Gastrocnemius medialis (tissue), 4 donors: ENCODE measurements at regions of chr6 and their contacts with region 1.

Region 1: DNA sequence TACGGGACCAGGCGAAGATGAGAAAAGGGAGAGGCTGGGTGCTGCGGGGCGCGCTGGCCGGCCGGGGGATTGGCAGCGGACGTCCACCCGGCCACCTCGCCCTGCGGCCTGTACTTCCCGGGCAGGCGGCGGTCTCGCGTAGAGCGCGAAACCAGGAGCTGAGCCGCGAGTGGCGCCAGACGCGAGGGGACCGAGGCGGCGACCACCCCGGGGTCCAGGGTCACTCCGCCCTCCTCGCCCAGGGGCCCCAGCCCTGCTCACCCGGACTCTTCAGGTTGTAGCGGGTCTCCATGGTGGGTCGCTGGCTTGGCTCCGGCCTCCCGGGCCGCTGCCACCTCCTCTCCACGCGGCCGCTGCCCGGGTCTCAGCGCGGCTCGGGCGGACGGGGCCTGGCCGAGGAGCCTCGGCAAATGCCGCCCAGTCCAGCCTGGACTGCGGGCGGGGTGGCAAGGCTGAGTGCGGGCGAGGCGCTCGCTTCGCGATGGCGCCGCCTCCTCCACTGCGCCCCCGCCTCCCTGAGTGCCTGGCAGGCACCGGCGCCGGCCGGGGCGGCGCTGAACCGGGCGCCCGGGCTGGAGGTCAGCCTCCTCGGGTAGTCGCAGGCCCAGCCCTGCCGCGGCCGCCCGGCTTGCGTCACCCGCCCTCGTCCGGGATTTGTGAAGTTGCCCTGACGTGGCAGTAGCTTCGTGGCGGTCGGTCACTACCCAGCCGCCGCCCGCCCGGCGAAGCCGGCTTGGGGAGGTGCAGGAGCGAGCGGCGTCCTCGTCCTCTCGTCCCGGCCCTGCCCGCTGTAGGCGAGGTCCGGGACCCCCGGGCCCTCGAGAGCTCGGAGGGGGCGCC is at the start of gene UBE2J1:
- DNase-seq: peak; percentile 90 to 95
- ATAC-seq: peak; percentile 86 to 89
- H3K4me3 ChIP-seq: peak within 1 kb of the TSS; percentile 70 to 95 (median 79)
- H3K27ac ChIP-seq: peak within 1 kb of the TSS; percentile 92 to 100 (median 96)
- H3K4me1 ChIP-seq: peaks cover 37 to 45% of the 10 kb centered on the region in 2 donors
- H3K27me3 ChIP-seq: no peaks in the 10 kb centered on the region
- CTCF ChIP-seq: no peak
- POLR2A ChIP-seq: peak; percentile 92 to 96
- total RNA-seq, gene UBE2J1: 10.5 to 15.1 (median 14.6) TPM

Region 2: GRCh38 chr6:89145787-89146646 is 206.5 kb before region 1 on chr6 and contains the start of gene PM20D2:
- in situ Hi-C with region 1: no loop called
- intact Hi-C with region 1: loop called (anchors 10 kb)
- DNase-seq: peak; percentile 54 to 75
- ATAC-seq: peak; percentile 67 to 71
- H3K4me3 ChIP-seq: peak within 1 kb of the TSS; percentile 74 to 90 (median 82)
- H3K27ac ChIP-seq: peak within 1 kb of the TSS; percentile 94 to 99 (median 98)
- H3K4me1 ChIP-seq: peaks cover 23 to 25% of the 10 kb centered on the region in 2 donors
- H3K27me3 ChIP-seq: no peaks in the 10 kb centered on the region
- CTCF ChIP-seq: no peak
- POLR2A ChIP-seq: peak; percentile 85 to 88
- total RNA-seq, gene PM20D2: 18.1 to 54.6 (median 26.3) TPM

Region 3: GRCh38 chr6:89297695-89298351 is 54.7 kb before region 1 on chr6:
- in situ Hi-C with region 1: no loop called
- intact Hi-C with region 1: loop called (anchors 2 kb)
- DNase-seq: peak; percentile 76 to 88
- ATAC-seq: peak; percentile 99
- H3K4me3 ChIP-seq: peak overlapping the region in 1 of 4 donors; percentile 22
- H3K27ac ChIP-seq: peak overlapping the region; percentile 71 to 86 (median 78)
- H3K4me1 ChIP-seq: peaks cover 15 to 21% of the 10 kb centered on the region in 2 donors
- H3K27me3 ChIP-seq: no peaks in the 10 kb centered on the region
- CTCF ChIP-seq: no peak
- POLR2A ChIP-seq: no peak